Activated CD8-positive, alpha-beta memory T cell treated with anti-CD3 and anti-CD28 coated beads, Interleukin-2, amount 10 ng/mL, durations not matched to agents 7 days and 5 days (primary cell): ENCODE measurements at regions of chr5 and their contacts with region 1.

Region 1: DNA sequence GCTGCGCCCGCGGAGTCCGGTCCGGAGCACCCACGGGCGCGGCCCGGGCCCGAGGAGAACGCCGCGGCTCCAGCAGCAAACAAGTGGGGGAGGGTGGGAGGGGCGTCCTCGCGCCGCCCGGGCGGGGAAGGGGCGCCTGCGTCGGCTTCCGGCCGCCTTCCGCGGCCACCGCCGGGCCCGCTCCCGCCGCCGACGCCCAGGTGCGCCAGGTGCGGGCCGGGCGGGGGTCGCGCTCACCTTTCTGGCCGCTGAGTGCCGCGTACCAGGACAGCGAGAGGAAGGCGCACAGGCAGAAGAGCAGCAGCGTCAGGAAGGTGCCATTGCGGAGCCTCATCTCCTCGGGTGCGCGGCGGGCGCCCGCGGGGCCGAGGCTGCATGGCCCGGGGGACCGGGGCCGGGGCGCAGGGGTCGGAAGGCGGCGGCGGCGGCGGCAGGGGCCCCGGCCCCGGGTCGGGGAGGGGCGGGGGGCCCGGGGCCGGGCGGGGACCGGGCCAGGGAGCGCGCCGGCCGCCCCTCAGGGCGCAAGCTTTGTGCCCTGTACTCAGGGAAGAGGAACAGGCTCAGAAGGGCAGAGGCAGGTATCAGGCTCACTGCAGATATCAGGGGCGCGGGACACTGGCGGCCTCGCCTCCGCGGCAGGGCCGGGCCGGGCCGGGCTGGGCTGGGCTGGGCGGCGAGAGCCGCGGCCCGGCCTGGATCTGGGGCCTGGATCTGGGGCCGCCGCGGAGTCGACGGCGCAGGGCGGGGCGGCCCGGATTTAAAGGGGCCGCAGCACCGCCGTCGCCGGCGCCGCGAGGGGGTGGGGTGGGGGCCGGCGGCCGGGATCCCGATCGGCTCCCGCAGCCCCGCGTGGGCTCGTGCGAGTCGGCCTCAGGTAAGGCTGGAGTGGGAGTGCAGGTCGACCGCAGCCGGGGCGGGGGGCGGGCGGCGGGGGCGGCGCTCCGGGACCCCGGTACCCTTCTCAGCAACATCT is at the start of gene MGAT4B:
- DNase-seq: peak; percentile 77
- ATAC-seq: peak; percentile 84
- H3K4me3 Mint-ChIP-seq: peak within 1 kb of the TSS; percentile 70
- H3K27ac Mint-ChIP-seq: peak within 1 kb of the TSS; percentile 77
- H3K4me1 Mint-ChIP-seq: peaks cover 34% of the 10 kb centered on the region
- H3K27me3 Mint-ChIP-seq: no peaks in the 10 kb centered on the region
- total RNA-seq, gene MGAT4B: 100 to 116 TPM

Region 2: DNA sequence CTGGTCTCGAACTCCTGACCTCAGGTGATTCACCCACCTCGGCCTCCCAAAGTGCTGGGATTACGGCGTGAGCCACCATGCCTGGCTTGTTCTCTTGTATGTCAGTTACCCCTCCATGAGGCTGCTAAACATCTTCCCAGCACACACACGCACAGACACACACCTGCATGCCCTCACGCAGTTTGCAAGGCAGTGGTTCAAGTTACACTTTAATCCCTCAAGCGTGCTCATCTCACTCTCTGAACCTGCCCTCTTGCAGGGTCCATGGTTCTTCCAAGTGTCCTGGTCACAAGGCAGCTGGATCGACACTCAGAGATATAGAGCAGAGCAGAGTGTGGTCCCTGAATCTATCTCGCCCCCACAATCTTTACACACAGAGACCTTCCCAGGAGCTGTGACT is 290.3 kb before region 1 on chr5:
- CTCF ChIA-PET with region 1: no interaction called
- DNase-seq: no peak
- ATAC-seq: no peak
- H3K4me3 Mint-ChIP-seq: no peak overlapping the region
- H3K27ac Mint-ChIP-seq: no peak overlapping the region
- H3K4me1 Mint-ChIP-seq: no peaks in the 10 kb centered on the region
- H3K27me3 Mint-ChIP-seq: no peaks in the 10 kb centered on the region

Region 3: DNA sequence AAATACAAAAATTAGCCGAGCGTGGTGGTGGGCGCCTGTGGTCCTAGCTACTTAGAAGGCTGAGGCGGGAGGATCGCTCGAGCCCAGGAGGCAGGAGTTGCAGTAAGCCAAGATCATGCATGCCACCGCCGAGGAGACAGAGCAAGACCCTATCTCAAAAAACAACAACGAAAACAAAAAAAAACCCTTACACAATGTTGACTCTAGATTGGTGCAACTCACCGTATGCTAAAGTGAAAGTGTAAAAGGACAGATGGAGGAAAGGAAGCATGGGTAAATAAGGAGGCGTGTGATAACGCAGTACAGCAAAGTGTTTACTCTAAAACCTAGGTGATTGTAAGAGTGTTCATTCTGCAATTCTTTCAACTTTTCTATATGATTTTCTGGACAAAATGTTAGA is 272.1 kb before region 1 on chr5:
- CTCF ChIA-PET with region 1: no interaction called
- DNase-seq: peak; percentile 18
- ATAC-seq: no peak
- H3K4me3 Mint-ChIP-seq: no peak overlapping the region
- H3K27ac Mint-ChIP-seq: peak overlapping the region; percentile 1
- H3K4me1 Mint-ChIP-seq: peaks cover 9% of the 10 kb centered on the region
- H3K27me3 Mint-ChIP-seq: peaks cover 4% of the 10 kb centered on the region

Region 4: DNA sequence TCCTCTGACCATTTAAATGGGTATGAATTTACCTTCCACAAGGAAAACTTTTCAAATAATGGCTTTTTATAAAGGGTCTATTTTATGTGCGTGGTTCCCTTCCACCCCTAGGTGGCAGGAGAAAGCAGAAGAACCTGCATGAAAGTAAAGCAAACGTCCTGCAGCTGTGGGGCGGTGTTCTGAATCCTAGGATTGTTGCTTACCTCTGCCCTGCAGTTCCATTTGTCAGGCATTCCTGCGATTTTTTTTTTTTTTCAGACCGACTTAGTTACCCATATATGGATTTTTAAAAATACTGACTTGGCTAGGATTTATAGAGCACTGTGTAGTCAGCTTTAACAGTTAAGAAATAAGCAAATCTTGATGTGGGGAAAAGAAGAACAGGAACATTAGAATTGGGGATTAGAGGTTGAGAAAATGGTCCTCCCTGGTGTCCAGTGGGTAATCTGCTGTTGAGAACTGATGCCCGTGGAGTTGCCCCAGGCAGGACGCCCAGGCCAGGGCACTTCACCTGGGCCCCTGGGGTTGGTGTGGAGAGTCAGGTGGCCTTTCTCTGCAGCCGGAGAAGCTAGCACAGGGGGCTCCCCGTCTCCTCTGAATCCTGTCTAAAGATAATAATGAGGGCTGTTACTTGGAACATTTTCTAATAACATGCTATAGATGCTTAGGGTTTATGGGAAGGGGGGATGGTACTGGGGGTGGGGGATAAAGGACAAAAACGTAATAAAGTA is 43.2 kb before region 1 on chr5:
- CTCF ChIA-PET with region 1: interaction called, 10 read pairs
- DNase-seq: peak; percentile 68
- ATAC-seq: peak; percentile 66
- H3K4me3 Mint-ChIP-seq: no peak overlapping the region
- H3K27ac Mint-ChIP-seq: no peak overlapping the region
- H3K4me1 Mint-ChIP-seq: peaks cover 47% of the 10 kb centered on the region
- H3K27me3 Mint-ChIP-seq: no peaks in the 10 kb centered on the region

Region 5: DNA sequence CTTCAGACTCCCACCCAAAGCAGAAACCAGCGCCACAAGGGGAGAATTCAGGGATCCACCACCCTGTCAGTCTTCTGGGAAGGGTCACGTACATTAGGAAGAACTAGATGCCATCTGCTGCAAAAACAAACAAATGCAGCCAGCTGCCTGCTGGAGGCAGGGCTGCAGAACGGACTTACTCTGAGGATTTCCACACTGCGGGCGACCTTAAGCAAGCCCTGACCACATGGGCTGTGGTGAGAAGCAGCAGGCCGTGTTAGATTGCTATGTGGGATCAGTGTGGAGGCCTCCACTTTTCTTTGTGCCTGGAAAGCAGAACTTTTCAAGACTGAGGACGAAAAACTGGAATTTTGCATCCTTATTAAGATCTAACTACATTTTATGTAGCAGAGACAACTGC is 26.2 kb before region 1 on chr5:
- CTCF ChIA-PET with region 1: no interaction called
- DNase-seq: no peak
- ATAC-seq: no peak
- H3K4me3 Mint-ChIP-seq: no peak overlapping the region
- H3K27ac Mint-ChIP-seq: no peak overlapping the region
- H3K4me1 Mint-ChIP-seq: no peaks in the 10 kb centered on the region
- H3K27me3 Mint-ChIP-seq: no peaks in the 10 kb centered on the region

Region 6: GRCh38 chr5:179818746-179819295 is 12.3 kb after region 1 on chr5:
- CTCF ChIA-PET with region 1: interaction called, 17 read pairs
- DNase-seq: peak; percentile 95
- ATAC-seq: peak; percentile 56
- H3K4me3 Mint-ChIP-seq: peak overlapping the region; percentile 75
- H3K27ac Mint-ChIP-seq: peak overlapping the region; percentile 84
- H3K4me1 Mint-ChIP-seq: peaks cover 41% of the 10 kb centered on the region
- H3K27me3 Mint-ChIP-seq: no peaks in the 10 kb centered on the region

Region 7: GRCh38 chr5:179852993-179853547 is 46.5 kb after region 1 on chr5:
- CTCF ChIA-PET with region 1: interaction called, 11 read pairs
- DNase-seq: no peak
- ATAC-seq: no peak
- H3K4me3 Mint-ChIP-seq: no peak overlapping the region
- H3K27ac Mint-ChIP-seq: no peak overlapping the region
- H3K4me1 Mint-ChIP-seq: peaks cover 10% of the 10 kb centered on the region
- H3K27me3 Mint-ChIP-seq: no peaks in the 10 kb centered on the region

Region 8: DNA sequence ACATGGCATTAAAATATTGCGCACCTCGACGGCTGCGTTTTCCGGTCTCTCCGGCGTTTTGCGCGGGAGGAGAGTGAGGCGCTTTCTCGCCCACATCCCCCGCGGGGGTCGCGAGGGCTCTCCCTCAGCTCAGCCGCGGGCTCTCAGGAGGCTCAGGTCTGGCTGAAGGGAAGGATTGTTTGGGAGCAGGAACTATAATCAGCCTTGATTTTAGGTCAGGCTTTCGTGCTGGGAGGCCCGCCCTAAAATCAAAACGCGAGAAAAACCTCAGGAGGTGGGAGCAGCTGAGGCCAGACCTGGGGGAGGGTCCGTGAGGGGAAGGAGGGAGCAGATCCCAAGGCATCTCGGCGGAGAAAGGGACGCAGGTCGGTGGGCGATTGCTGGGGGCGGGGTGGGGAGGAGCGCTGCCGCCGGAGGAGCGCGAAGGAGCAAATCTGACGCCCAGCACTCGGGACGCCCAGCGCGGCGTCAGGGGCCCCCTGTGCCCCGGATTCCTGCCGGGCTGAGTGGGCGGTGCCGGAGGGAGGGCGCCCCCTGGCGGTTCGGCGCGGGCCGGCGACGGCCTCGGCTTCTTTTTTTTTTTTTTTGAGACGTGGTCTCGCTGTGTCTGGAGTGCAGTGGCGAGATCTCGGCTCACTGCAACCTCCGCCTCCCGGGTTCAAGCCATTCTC is 283.7 kb after region 1 on chr5:
- CTCF ChIA-PET with region 1: interaction called, 11 read pairs
- DNase-seq: peak; percentile 77
- ATAC-seq: peak; percentile 94
- H3K4me3 Mint-ChIP-seq: peak overlapping the region; percentile 71
- H3K27ac Mint-ChIP-seq: peak overlapping the region; percentile 59
- H3K4me1 Mint-ChIP-seq: peaks cover 20% of the 10 kb centered on the region
- H3K27me3 Mint-ChIP-seq: peaks cover 11% of the 10 kb centered on the region